Prostate gland (tissue), 2 donors: ENCODE measurements at regions of chr14 and their contacts with region 1.

Region 1: GRCh38 chr14:73851644-73852382 is at the start of gene PTGR2:
- DNase-seq: peak; percentile 89
- H3K4me3 ChIP-seq: peak within 1 kb of the TSS; percentile 49 to 50
- H3K27ac ChIP-seq: peak within 1 kb of the TSS; percentile 86 to 94
- H3K4me1 ChIP-seq: no peaks in the 10 kb centered on the region
- H3K27me3 ChIP-seq: no peaks in the 10 kb centered on the region
- CTCF ChIP-seq: peak in 2 of 4 experiments; percentile 37 to 43
- POLR2A ChIP-seq: peak; percentile 79
- total RNA-seq, gene PTGR2: 10.7 to 13.6 TPM

Region 2: GRCh38 chr14:73472185-73473114 is 379.4 kb before region 1 on chr14:
- intact Hi-C with region 1: no loop called
- DNase-seq: peak; percentile 23
- H3K4me3 ChIP-seq: no peak overlapping the region
- H3K27ac ChIP-seq: no peak overlapping the region
- H3K4me1 ChIP-seq: no peaks in the 10 kb centered on the region
- H3K27me3 ChIP-seq: no peaks in the 10 kb centered on the region
- CTCF ChIP-seq: peak; percentile 23 to 82 (median 64)
- POLR2A ChIP-seq: no peak

Region 3: DNA sequence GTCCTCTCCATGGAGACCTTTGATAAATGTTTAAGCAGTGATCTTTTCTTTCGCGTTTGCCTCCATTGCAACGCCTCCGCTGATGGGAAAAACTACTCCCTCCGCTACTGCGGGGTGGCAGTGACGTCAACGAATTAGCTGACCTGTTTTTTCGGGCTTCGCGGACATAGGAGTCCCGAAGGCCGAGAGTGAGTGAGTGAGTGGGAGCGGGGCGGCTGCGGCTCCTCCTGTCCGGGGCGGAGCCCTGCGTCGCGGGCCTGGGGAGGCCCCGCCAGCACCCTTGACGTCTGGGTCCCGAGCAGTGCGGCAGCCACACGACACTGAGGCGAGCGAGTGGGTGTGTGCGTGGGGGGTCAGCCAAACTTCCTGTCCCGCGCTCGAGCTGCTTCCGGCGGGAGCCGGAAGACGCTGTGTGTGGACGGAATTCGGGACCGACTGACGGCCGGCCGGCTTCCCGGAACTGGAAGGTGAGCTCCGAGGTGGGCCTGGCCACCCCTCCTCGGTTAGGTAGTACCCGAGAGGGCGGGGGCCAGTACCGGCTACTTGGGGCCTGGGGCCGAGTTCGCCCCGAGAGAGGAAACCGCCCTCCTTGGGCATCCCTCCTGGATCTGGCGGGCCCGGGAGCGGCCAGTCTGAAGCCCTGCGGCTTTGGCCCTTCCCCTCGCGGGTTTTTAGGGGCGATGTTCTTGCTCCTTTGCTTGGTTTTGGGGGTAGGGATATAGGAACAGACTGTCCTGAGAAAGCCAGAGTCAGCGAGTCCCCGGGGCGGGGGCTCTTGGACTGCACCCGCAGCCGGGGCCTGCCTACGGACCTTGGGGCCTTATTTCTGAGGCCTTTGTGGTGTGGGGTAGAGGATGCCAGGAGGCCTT is 34.9 kb after region 1 on chr14 and contains the start of gene ZNF410:
- intact Hi-C with region 1: loop called (anchors 5 kb)
- DNase-seq: peak; percentile 92
- H3K4me3 ChIP-seq: peak within 1 kb of the TSS; percentile 56 to 74
- H3K27ac ChIP-seq: peak within 1 kb of the TSS; percentile 89 to 92
- H3K4me1 ChIP-seq: peaks cover 3% of the 10 kb centered on the region
- H3K27me3 ChIP-seq: no peaks in the 10 kb centered on the region
- CTCF ChIP-seq: no peak
- POLR2A ChIP-seq: peak; percentile 77
- total RNA-seq, gene ZNF410: 47.7 to 56.5 TPM